PC-9 (cell line): ENCODE measurements at regions of chr1 and their contacts with region 1.

Region 1: DNA sequence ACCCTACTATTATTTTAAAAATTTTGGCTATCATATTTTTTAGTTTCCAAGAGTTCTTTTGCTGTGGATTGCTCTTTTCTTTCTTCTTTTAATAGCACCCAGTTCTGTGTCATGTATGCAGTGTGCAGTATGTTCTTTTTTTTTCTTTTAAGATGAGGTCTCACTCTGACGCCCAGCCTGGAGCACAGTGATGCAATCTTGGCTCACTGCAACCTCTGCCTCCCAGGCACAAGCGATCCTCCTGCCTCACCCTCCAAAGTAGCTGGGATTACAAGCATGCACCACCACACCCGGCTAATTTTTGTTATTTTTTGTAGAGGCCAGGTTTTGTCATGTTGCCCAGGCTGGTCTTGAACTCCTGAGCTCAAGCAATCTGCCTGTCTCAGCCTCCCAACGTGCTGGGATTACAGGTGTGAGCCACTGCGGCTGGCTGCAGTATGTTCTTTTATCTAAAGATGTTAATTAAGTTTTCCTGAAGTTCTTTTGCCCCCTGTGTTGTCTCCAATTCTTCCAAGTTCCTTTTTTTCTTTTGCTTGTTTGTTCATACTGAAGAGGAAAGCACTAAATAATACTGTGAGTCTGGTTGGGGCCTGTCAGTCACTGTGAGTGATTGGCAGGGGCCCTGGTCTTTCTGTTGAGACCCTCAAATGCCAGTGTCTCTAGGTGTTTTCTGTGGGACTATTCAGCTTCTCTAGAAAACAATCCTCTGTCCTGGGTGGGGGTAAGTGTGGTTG is 17.5 kb upstream of the TTC22 start:
- DNase-seq: peak; percentile 27 to 31
- H3K4me3 ChIP-seq: no peak overlapping the region
- H3K27ac ChIP-seq: peak overlapping the region; percentile 47
- H3K4me1 ChIP-seq: peaks cover 14% of the 10 kb centered on the region
- H3K27me3 ChIP-seq: no peaks in the 10 kb centered on the region
- CTCF ChIP-seq: no peak

Region 2: DNA sequence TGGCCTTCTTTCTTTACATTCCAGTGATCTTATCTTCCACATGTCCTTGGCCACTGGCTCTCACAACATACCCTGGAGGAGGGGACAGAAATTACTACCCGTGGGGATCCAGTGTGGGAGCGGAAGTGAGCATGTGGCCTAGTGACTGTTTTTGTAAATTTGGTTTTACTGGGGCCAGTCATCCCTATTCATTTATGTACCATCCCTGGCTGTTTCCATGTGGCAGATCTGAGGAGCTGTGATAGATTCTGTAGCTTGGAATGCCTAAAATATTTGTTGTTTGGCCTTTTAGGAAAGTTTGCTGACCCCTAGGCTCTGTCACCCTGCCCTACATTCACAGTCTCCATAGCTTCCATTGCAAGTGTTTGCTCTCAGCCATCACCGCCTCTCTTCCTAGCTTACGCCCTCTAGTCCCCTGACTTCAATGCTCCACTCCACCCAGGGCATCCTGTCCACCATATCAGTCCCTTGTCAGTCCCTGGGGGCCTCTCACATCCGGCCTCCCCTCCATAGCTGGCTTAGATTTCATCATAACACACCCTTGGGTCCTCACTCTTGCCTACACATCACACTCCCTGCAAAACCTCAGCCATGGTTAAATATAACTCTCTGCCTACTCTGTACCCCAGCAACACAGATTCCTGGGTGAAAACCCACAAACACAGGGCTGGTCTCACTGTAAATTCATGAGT is 42.6 kb after region 1 on chr1:
- CTCF ChIA-PET with region 1: no interaction called
- POLR2A ChIA-PET with region 1: interaction called, 5 read pairs
- intact Hi-C with region 1: loop called (anchors 1 kb)
- DNase-seq: peak; percentile 79 to 89
- H3K4me3 ChIP-seq: no peak overlapping the region
- H3K27ac ChIP-seq: peak overlapping the region; percentile 88
- H3K4me1 ChIP-seq: peaks cover 90% of the 10 kb centered on the region
- H3K27me3 ChIP-seq: no peaks in the 10 kb centered on the region
- CTCF ChIP-seq: no peak

Region 3: DNA sequence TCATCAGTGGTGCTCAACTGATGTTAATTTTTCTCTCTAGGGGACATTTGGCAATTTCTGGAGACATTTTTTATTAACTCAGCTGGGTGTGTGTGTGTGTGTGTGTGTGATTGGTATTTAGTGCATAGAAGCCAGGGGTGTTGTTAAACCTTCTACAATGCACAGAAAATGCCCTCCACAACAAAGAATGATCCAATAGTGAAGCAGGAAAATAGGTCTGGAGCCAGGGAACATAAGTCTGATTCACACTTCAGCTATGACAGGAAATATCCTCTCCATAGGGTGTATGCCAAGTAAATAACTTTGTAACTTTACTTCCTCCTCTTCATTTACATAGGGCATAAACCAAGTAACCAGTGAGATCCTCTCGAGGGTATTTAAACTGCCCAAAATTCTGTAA is 136.7 kb after region 1 on chr1:
- CTCF ChIA-PET with region 1: no interaction called
- POLR2A ChIA-PET with region 1: no interaction called
- intact Hi-C with region 1: no loop called
- DNase-seq: peak in 1 of 2 experiments; percentile 93
- H3K4me3 ChIP-seq: no peak overlapping the region
- H3K27ac ChIP-seq: peak overlapping the region; percentile 68
- H3K4me1 ChIP-seq: peaks cover 57% of the 10 kb centered on the region
- H3K27me3 ChIP-seq: no peaks in the 10 kb centered on the region
- CTCF ChIP-seq: no peak

Region 4: GRCh38 chr1:54989968-54990810 is 171.6 kb after region 1 on chr1:
- CTCF ChIA-PET with region 1: no interaction called
- POLR2A ChIA-PET with region 1: no interaction called
- intact Hi-C with region 1: loop called (anchors 2 kb)
- DNase-seq: no peak
- H3K4me3 ChIP-seq: no peak overlapping the region
- H3K27ac ChIP-seq: no peak overlapping the region
- H3K4me1 ChIP-seq: peaks cover 30% of the 10 kb centered on the region
- H3K27me3 ChIP-seq: no peaks in the 10 kb centered on the region
- CTCF ChIP-seq: no peak